ENCODE measurements at regions of chr22 and their contacts with region 1.

Region 1: DNA sequence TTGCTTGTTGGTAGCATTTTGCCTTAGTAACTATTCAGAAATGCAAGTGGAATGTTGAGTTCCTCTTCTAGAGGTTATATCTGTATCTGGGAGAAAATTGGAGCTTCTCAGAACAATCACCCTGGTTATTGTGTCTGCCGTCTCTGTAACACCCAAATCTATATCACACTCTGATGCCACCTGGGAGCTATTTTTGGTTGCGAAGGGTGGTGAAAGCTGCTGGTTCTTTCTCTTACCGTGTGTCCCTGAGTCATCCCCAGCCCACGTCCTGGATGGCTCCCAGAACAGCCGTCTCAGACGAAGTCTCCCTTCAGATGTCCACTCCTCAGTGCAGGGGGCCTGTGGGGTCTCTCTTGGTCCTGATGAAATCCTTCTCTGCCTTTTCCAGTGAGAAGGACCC is 83.5 kb downstream of the C22orf31 start:
- DNase-seq: peak; percentile 80 to 91
- ATAC-seq: peak; percentile 83 to 85
- H3K4me3 ChIP-seq: peak overlapping the region; percentile 36 to 45 (median 42)
- H3K27ac ChIP-seq: peak overlapping the region; percentile 84 to 94 (median 92)
- H3K4me1 ChIP-seq: peaks cover 47 to 59% of the 10 kb centered on the region in 2 donors
- H3K27me3 ChIP-seq: no peaks in the 10 kb centered on the region
- CTCF ChIP-seq: no peak
- POLR2A ChIP-seq: peak; percentile 65 to 78

Region 2: DNA sequence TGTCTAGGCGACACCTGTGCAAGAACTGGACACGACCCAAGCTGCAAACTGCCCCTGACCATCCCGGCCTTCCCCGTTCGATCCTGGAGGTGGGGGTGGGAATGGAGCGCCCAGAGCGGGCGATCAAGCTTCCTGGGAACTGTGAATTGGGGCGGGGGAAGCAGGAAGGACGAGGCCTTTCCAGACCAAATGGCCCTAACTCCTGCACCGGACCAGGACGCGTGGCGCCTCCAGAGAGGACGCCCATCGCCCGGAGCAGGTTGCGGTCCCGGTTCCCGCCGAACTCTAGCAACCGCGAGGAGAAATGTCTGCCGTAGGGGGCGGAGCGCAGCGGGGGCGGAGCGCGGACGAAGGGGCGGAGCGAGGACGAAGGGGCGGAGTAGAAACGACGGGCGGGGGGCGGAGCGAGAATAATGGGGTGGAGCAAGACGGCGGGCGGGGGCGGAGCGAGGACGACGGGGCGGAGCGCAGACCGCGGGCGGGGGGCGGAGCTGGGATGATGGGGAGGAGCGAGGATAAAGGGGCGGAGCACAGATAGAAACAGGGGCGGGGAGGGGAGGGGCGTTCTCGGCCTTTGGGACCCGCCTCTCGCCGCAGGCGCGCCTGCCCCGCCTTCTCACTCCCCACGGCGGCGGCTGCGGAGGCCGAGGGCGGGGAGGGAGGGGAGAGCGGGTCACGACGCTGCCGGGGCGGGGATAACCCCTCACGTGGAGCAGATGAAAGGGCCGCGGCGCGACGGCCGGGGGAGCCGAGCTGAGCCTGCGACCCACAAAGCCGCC is 95.1 kb before region 1 on chr22 and contains the start of gene ZNRF3:
- in situ Hi-C with region 1: no loop called
- intact Hi-C with region 1: loop called (anchors 1 kb)
- DNase-seq: peak; percentile 89 to 91
- ATAC-seq: peak; percentile 87 to 88
- H3K4me3 ChIP-seq: peak within 1 kb of the TSS; percentile 69 to 96 (median 79)
- H3K27ac ChIP-seq: peak within 1 kb of the TSS; percentile 66 to 76 (median 76)
- H3K4me1 ChIP-seq: peaks cover 12 to 34% of the 10 kb centered on the region in 2 donors
- H3K27me3 ChIP-seq: no peaks in the 10 kb centered on the region
- CTCF ChIP-seq: peak in 1 of 5 experiments; percentile 14
- POLR2A ChIP-seq: peak; percentile 83
- total RNA-seq, gene ZNRF3: 7.8 to 19.1 (median 11.1) TPM

Region 3: GRCh38 chr22:29004647-29005371 is 26.7 kb after region 1 on chr22:
- in situ Hi-C with region 1: no loop called
- intact Hi-C with region 1: loop called (anchors 1 kb)
- DNase-seq: peak; percentile 14 to 36
- ATAC-seq: peak; percentile 56 to 66
- H3K4me3 ChIP-seq: peak overlapping the region in 3 of 4 donors; percentile 10 to 18 (median 10)
- H3K27ac ChIP-seq: peak overlapping the region; percentile 71 to 79 (median 72)
- H3K4me1 ChIP-seq: peaks cover 39 to 53% of the 10 kb centered on the region in 2 donors
- H3K27me3 ChIP-seq: no peaks in the 10 kb centered on the region
- CTCF ChIP-seq: no peak
- POLR2A ChIP-seq: no peak

Region 4: DNA sequence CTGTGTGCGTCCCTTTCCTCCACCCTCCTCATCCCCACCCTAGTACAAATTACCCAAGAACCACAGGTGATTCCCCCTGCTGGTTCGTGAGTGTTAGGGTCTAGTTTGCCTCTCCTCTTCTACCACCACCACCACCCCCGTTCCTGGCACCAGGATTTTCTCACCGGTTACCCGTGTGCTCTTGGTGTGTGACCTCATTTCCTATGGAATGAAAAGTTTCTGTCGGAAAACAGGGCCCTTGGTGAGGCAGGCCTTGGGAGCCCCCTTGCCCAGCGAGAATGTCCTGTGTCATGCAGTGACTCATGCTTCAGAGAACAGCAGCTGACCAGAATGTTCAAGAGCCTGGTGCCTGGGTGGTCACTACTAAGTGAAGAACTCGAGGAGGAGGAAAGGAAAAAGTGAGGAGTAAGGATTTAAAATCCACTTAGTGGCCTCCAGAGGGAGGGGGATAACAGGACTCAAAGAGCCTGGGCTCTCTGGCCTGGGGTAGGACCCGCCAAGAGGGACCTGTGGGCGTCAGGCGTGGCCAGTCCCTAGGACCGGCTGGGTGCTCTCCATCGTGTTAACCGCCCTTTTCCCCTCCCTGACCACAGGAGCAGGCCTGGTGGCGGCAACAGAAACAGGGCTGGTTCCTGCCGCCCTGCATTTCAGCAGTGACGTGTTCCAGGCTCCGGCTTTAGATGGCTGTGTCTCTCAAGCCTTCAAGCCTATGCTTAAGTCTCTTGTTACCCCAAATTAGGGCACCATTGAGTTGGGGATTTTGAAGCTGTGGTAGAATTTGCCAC is 53.3 kb after region 1 on chr22:
- in situ Hi-C with region 1: no loop called
- intact Hi-C with region 1: loop called (anchors 1 kb)
- DNase-seq: peak; percentile 34 to 67
- ATAC-seq: peak; percentile 90 to 93
- H3K4me3 ChIP-seq: peak overlapping the region; percentile 51 to 70 (median 58)
- H3K27ac ChIP-seq: peak overlapping the region; percentile 69 to 83 (median 80)
- H3K4me1 ChIP-seq: peaks cover 19 to 23% of the 10 kb centered on the region in 2 donors
- H3K27me3 ChIP-seq: no peaks in the 10 kb centered on the region
- CTCF ChIP-seq: peak in 1 of 5 experiments; percentile 19
- POLR2A ChIP-seq: no peak

Region 5: DNA sequence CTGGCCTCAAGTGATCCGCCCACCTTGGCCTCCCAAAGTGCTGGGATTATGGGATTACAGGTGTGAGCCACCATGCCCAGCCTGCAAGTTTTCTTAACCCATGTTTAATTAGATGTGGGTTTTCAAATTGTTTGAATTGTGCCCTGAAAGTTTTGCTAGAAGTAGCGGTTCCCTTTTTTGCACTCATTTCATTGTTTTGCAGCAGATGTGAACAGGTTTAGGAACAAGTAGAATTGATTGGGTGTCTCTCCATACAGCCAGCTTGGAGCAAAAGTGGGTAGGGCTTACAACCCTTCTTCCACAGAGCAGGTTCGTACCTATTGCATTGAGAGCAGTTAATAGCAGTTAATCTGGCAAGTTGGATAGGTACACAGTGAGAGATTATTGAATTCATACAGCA is 306.0 kb after region 1 on chr22:
- in situ Hi-C with region 1: no loop called
- intact Hi-C with region 1: no loop called
- DNase-seq: no peak
- ATAC-seq: no peak
- H3K4me3 ChIP-seq: no peak overlapping the region
- H3K27ac ChIP-seq: no peak overlapping the region
- H3K4me1 ChIP-seq: no peaks in the 10 kb centered on the region
- H3K27me3 ChIP-seq: no peaks in the 10 kb centered on the region
- CTCF ChIP-seq: no peak
- POLR2A ChIP-seq: no peak

Measured in gastrocnemius medialis (tissue), 4 donors.